ENCODE measurements at regions of chr18 and their contacts with region 1.

Region 1: GRCh38 chr18:48777026-48777743 is 173.6 kb downstream of the SMAD7 start:
- DNase-seq: peak in 1 of 2 donors; percentile 83
- H3K4me3 ChIP-seq: no peak overlapping the region
- H3K27ac ChIP-seq: peak overlapping the region; percentile 94 to 95
- H3K4me1 ChIP-seq: peaks cover 17 to 44% of the 10 kb centered on the region in 2 donors
- H3K27me3 ChIP-seq: no peaks in the 10 kb centered on the region
- CTCF ChIP-seq: peak; percentile 92 to 96 (median 92)

Region 2: DNA sequence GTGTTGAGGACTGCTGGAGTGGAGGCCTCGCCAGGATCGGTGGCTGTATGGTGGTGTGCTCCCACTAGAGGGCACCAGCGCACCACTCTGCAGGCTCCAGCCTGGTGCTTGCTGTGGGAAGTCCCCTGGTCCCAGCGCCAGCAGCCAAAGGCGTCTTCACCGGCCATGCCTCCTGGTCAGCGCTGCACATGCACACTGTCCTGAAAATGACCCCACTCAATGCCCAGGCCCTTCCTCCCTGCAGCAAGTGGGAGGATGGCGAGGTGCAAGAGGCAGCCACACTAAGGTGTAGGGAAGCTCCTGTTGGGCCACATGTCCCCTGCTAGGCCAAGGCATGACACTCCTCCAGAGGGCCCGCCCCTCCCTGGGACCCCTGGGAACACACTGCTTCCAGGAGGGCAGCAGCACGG is 101.8 kb before region 1 on chr18:
- intact Hi-C with region 1: loop called (anchors 2 kb)
- DNase-seq: peak; percentile 47 to 91
- H3K4me3 ChIP-seq: no peak overlapping the region
- H3K27ac ChIP-seq: peak overlapping the region in 1 of 2 donors; percentile 84
- H3K4me1 ChIP-seq: peaks cover 18 to 33% of the 10 kb centered on the region in 2 donors
- H3K27me3 ChIP-seq: no peaks in the 10 kb centered on the region
- CTCF ChIP-seq: peak; percentile 92 to 95 (median 94)

Region 3: GRCh38 chr18:48827291-48828193 is 50.4 kb after region 1 on chr18:
- intact Hi-C with region 1: loop called (anchors 5 kb)
- DNase-seq: peak in 1 of 2 donors; percentile 65
- H3K4me3 ChIP-seq: peak overlapping the region; percentile 16 to 56
- H3K27ac ChIP-seq: peak overlapping the region; percentile 85
- H3K4me1 ChIP-seq: peaks cover 10 to 73% of the 10 kb centered on the region in 2 donors
- H3K27me3 ChIP-seq: no peaks in the 10 kb centered on the region
- CTCF ChIP-seq: no peak

Region 4: DNA sequence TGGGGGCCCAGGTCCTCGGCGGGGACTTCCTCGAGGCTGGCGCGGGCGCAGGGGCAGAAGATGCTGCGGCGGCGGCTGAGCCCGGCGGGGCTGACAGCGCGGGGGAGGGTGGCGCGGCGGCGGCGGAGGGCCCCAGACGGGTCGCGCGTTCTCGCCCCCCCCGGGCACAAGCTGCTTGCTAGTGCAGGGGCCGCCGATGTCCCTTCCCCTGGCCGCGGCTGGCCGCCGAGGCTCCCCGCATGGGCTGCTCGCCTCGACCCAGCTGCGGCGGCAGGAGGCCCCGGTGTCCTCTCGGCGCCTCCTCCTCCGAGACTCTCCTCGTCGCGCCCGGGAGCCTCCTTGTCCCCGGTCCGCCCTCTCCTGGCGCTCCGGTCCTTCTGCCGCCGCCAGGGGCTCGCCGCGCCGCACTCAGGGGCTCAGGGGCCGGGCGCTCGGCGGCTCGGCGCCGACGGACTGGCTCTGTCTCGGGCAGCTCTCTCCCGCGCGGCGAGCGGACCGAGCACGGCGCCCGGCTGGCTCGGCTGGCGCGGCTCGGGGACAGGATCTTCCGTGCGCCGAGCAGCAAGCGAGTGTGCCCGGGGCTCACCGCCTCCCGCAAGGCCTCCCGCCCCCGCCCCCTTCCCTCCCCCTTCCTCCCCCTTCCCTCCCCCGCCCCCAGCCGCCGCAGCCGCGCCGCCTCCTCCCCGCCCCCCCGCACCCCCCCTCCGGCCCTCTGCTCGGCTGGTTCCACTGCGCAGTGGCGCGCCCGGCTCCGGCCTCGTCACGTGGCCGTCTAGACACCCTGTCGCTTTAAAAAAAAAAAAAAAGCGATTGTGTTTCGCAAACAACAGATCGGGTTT is 174.5 kb after region 1 on chr18:
- intact Hi-C with region 1: loop called (anchors 2 kb)
- DNase-seq: peak in 1 of 2 donors; percentile 93
- H3K4me3 ChIP-seq: peak overlapping the region; percentile 88 to 94
- H3K27ac ChIP-seq: peak overlapping the region; percentile 97 to 99
- H3K4me1 ChIP-seq: peaks cover 15 to 37% of the 10 kb centered on the region in 2 donors
- H3K27me3 ChIP-seq: no peaks in the 10 kb centered on the region
- CTCF ChIP-seq: peak; percentile 13 to 55 (median 21)

Region 5: DNA sequence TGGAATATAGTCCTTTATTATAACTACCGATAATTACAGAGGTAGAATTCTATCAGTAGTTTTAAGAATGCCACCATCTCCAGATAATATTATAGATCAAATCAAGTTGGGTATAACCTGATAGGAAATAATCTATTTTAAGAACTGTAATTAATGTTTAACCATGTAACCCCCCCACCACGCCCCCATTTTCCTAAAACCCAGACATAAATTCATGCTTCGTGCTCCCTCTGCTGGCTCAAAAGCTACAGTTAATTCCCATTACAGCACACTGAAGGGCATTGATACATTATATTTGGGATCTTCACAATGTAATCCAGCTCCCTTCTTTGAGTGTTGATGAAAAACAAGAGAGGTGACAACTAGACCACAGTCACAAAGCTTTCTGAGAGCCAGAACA is 401.6 kb after region 1 on chr18:
- intact Hi-C with region 1: loop called (anchors 2 kb)
- DNase-seq: no peak
- H3K4me3 ChIP-seq: no peak overlapping the region
- H3K27ac ChIP-seq: no peak overlapping the region
- H3K4me1 ChIP-seq: peaks cover 0 to 4% of the 10 kb centered on the region in 2 donors
- H3K27me3 ChIP-seq: no peaks in the 10 kb centered on the region
- CTCF ChIP-seq: peak; percentile 42 to 68 (median 63)

Region 6: GRCh38 chr18:49412679-49413078 is 635.5 kb after region 1 on chr18:
- intact Hi-C with region 1: loop called (anchors 10 kb)
- DNase-seq: no peak
- H3K4me3 ChIP-seq: no peak overlapping the region
- H3K27ac ChIP-seq: no peak overlapping the region
- H3K4me1 ChIP-seq: no peaks in the 10 kb centered on the region
- H3K27me3 ChIP-seq: no peaks in the 10 kb centered on the region
- CTCF ChIP-seq: no peak